ENCODE measurements at regions of chrX and their contacts with region 1.

Region 1: GRCh38 chrX:76454456-76454927 is 27.0 kb downstream of the MAGEE1 start:
- DNase-seq: peak; percentile 2
- H3K4me3 ChIP-seq: no peak overlapping the region
- H3K27ac ChIP-seq: no peak overlapping the region
- H3K4me1 ChIP-seq: no peaks in the 10 kb centered on the region
- H3K27me3 ChIP-seq: no peaks in the 10 kb centered on the region
- CTCF ChIP-seq: peak; percentile 17 to 28
- POLR2A ChIP-seq: no peak

Region 2: GRCh38 chrX:76279000-76279399 is 175.5 kb before region 1 on chrX:
- CTCF ChIA-PET with region 1: interaction called, 35 read pairs
- POLR2A ChIA-PET with region 1: no interaction called
- dilution Hi-C with region 1: no loop called
- intact Hi-C with region 1: loop called (anchors 2 kb)
- DNase-seq: peak; percentile 40
- H3K4me3 ChIP-seq: no peak overlapping the region
- H3K27ac ChIP-seq: no peak overlapping the region
- H3K4me1 ChIP-seq: no peaks in the 10 kb centered on the region
- H3K27me3 ChIP-seq: no peaks in the 10 kb centered on the region
- CTCF ChIP-seq: peak; percentile 17 to 28
- POLR2A ChIP-seq: no peak

Region 3: DNA sequence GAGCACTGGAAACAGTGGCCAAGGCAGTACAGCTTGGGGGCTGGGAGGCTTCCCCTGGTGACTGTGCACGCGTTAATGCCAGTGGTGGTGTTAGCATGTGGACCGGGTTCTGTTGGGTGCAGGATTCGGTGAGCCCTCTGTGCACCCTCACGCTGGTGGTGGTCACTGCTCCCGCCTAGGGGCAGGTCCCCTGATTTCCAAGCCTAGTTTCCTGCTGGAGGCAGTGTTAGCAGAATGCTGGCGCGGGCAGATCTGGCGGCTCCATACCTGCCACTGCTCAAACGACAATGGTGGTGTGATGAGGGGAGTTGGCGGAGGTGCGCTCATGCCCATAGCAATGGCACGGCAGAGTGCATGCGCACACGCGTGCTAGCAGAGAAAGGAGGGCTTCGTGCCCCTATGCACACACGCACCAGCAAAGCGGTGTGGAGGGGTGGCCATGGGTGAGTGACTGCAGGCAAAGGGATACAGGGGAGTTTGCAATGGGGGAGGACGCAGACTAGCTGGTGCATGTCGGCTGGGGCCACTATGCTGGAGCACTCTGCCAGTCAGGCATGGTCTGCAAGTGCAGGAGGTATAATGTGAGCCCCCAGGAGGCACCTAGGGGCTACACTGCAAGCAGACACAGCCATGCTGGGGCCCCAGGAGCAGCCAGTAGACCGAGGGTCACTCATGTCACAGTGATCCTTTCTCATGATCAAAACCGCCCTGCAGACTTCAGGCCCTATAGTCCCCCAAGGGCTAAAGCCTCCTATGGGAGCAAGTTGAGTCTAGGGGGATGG is 66.0 kb after region 1 on chrX:
- CTCF ChIA-PET with region 1: no interaction called
- POLR2A ChIA-PET with region 1: no interaction called
- dilution Hi-C with region 1: no loop called
- intact Hi-C with region 1: no loop called
- DNase-seq: no peak
- H3K4me3 ChIP-seq: no peak overlapping the region
- H3K27ac ChIP-seq: no peak overlapping the region
- H3K4me1 ChIP-seq: no peaks in the 10 kb centered on the region
- H3K27me3 ChIP-seq: no peaks in the 10 kb centered on the region
- CTCF ChIP-seq: no peak
- POLR2A ChIP-seq: no peak